ENCODE measurements at regions of chr9 and their contacts with region 1.

Region 1: GRCh38 chr9:130701056-130702022 is 7.8 kb downstream of the EXOSC2 start:
- DNase-seq: peak; percentile 71 to 79 (median 78)
- ATAC-seq: peak; percentile 85
- H3K4me3 ChIP-seq: no peak overlapping the region
- H3K27ac ChIP-seq: no peak overlapping the region
- H3K4me1 ChIP-seq: peaks cover 16% of the 10 kb centered on the region
- H3K27me3 ChIP-seq: no peaks in the 10 kb centered on the region
- CTCF ChIP-seq: peak; percentile 67 to 89 (median 79)
- POLR2A ChIP-seq: no peak

Region 2: GRCh38 chr9:130610862-130611707 is 90.3 kb before region 1 on chr9:
- intact Hi-C with region 1: no loop called
- DNase-seq: no peak
- ATAC-seq: no peak
- H3K4me3 ChIP-seq: no peak overlapping the region
- H3K27ac ChIP-seq: no peak overlapping the region
- H3K4me1 ChIP-seq: no peaks in the 10 kb centered on the region
- H3K27me3 ChIP-seq: no peaks in the 10 kb centered on the region
- CTCF ChIP-seq: no peak
- POLR2A ChIP-seq: no peak

Region 3: GRCh38 chr9:130805510-130806326 is 104.4 kb after region 1 on chr9:
- intact Hi-C with region 1: no loop called
- DNase-seq: no peak
- ATAC-seq: no peak
- H3K4me3 ChIP-seq: no peak overlapping the region
- H3K27ac ChIP-seq: no peak overlapping the region
- H3K4me1 ChIP-seq: no peaks in the 10 kb centered on the region
- H3K27me3 ChIP-seq: no peaks in the 10 kb centered on the region
- CTCF ChIP-seq: no peak
- POLR2A ChIP-seq: no peak

Region 4: DNA sequence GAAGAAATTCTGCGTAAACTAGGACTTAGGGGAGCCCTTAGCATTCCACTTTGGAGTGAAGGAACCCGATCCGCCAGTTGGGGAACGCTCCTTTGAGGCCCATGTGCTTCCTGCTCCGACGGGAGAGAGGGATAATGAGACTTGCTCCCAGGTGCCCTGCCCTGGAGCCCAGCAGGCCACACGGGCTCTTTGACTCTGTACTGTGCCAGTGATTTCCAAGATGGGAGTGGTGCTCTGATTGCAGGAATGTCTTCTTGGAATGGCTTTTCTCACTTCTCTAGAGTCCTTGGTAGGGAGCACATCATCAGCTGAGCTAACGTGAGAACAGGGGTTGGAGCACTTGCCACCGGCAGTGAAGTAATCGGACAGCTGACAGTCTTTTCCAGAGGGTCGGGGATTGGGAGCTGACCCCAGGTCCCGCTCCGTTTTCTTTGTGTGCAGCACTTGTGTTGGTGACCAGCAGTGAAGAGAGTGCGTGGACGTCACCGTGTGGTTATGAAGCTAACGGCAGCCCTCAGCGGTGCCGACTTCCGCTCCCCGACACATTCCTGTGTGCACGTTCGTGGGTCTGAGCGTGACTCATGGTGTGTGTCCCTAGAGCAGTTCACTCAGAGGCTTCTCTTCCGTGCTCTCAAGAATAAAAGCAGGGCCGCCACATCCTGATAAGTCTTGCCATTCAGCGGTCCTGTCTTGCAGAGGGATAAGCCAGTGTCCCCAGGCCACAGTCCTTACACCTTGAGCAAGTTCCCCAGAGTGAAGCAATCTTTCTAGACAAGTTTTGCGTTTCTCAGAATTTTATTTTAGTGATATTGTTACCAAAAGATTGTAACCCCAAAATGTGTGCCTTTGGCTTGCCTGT is 159.3 kb after region 1 on chr9:
- intact Hi-C with region 1: loop called (anchors 5 kb)
- DNase-seq: peak; percentile 39 to 66 (median 56)
- ATAC-seq: peak; percentile 78
- H3K4me3 ChIP-seq: no peak overlapping the region
- H3K27ac ChIP-seq: peak overlapping the region in 2 of 4 donors; percentile 13 to 26
- H3K4me1 ChIP-seq: no peaks in the 10 kb centered on the region
- H3K27me3 ChIP-seq: no peaks in the 10 kb centered on the region
- CTCF ChIP-seq: peak in 3 of 7 experiments; percentile 2 to 13 (median 13)
- POLR2A ChIP-seq: no peak

Region 5: GRCh38 chr9:130940693-130941576 is 239.6 kb after region 1 on chr9:
- intact Hi-C with region 1: loop called (anchors 5 kb)
- DNase-seq: peak; percentile 88 to 90 (median 88)
- ATAC-seq: peak; percentile 88
- H3K4me3 ChIP-seq: no peak overlapping the region
- H3K27ac ChIP-seq: no peak overlapping the region
- H3K4me1 ChIP-seq: peaks cover 29% of the 10 kb centered on the region
- H3K27me3 ChIP-seq: peaks cover 0 to 45% of the 10 kb centered on the region in 2 donors
- CTCF ChIP-seq: peak; percentile 67 to 92 (median 90)
- POLR2A ChIP-seq: no peak

Region 6: GRCh38 chr9:131046581-131047202 is 345.4 kb after region 1 on chr9:
- intact Hi-C with region 1: loop called (anchors 10 kb)
- DNase-seq: peak; percentile 65 to 76 (median 67)
- ATAC-seq: peak; percentile 78
- H3K4me3 ChIP-seq: no peak overlapping the region
- H3K27ac ChIP-seq: no peak overlapping the region
- H3K4me1 ChIP-seq: peaks cover 4% of the 10 kb centered on the region
- H3K27me3 ChIP-seq: no peaks in the 10 kb centered on the region
- CTCF ChIP-seq: peak; percentile 69 to 86 (median 75)
- POLR2A ChIP-seq: no peak

Measured in body of pancreas (tissue), 4 donors.